ENCODE measurements at regions of chr2 and their contacts with region 1.

Region 1: DNA sequence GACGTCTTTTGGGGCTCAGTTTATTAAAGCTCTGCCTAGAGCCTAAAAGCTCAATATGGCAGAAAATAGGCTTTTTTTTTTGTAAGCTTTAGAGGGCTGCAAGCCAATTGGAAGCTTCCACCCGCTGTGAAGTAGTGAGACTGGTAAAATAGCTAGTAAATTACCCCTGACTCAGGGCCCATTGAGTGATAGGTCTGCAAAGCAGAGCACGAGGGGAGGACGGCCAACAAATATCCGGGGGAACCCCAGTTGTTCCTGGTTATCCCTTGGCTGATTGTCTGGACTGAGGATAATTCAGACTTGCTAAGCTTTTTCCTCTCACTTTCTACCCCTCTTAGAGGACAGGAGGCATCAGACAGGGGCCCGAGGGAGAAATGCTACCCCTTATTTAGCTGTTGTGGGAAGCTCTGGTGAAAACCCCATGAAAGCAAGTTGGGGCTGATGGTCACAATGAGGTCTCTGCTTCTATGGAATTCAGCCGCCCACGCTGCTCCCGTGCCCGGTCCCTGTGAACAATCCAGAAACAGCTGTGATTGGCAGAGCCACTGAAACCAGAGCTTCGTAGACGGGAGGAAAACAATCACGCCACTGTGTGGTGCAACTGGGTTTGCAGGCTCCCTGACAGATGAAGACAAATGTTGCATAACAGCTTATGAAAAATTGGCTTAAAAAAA is 141.9 kb upstream of the LGALSL start:
- DNase-seq: peak; percentile 78
- ATAC-seq: peak; percentile 91
- H3K4me3 ChIP-seq: no peak overlapping the region
- H3K27ac ChIP-seq: no peak overlapping the region
- H3K4me1 ChIP-seq: peaks cover 3% of the 10 kb centered on the region
- H3K27me3 ChIP-seq: peaks cover 28% of the 10 kb centered on the region
- CTCF ChIP-seq: peak; percentile 51
- POLR2A ChIP-seq: no peak
- RAD21 ChIP-seq: peak; percentile 58

Region 2: DNA sequence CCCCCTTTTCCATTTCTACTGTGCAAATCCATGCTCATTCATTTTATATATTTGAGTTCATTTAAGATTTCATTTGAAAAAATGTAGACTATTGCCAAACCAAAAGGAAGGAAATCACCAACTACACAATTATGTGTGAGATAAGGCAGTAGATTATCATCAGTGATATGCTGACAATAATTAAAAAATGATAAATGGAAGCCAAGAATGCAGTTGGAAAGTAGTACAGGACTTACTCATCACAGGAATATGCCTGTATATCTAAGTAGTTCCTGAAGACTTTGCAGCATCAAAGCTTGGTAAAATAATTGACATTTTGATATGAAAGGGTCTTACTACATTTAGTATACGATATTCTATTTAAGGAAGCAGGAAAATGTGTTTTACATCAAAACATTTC is 1427.6 kb before region 1 on chr2:
- CTCF ChIA-PET with region 1: no interaction called
- POLR2A ChIA-PET with region 1: no interaction called
- dilution Hi-C with region 1: no loop called
- in situ Hi-C with region 1: no loop called
- intact Hi-C with region 1: no loop called
- DNase-seq: peak; percentile 30
- ATAC-seq: peak; percentile 56; the same call in 1 of the 2 replicates
- H3K4me3 ChIP-seq: no peak overlapping the region
- H3K27ac ChIP-seq: no peak overlapping the region
- H3K4me1 ChIP-seq: no peaks in the 10 kb centered on the region
- H3K27me3 ChIP-seq: no peaks in the 10 kb centered on the region
- CTCF ChIP-seq: no peak
- POLR2A ChIP-seq: no peak
- RAD21 ChIP-seq: no peak

Region 3: GRCh38 chr2:64045938-64046337 is 266.1 kb before region 1 on chr2:
- CTCF ChIA-PET with region 1: interaction called, 20 read pairs
- POLR2A ChIA-PET with region 1: interaction called, 3 read pairs
- dilution Hi-C with region 1: loop called (anchors 25 kb)
- in situ Hi-C with region 1: no loop called
- intact Hi-C with region 1: loop called (anchors 5 kb)
- DNase-seq: no peak
- ATAC-seq: no peak
- H3K4me3 ChIP-seq: no peak overlapping the region
- H3K27ac ChIP-seq: no peak overlapping the region
- H3K4me1 ChIP-seq: no peaks in the 10 kb centered on the region
- H3K27me3 ChIP-seq: peaks cover 4% of the 10 kb centered on the region; the same call in 1 of the 2 replicates
- CTCF ChIP-seq: no peak
- POLR2A ChIP-seq: no peak
- RAD21 ChIP-seq: no peak

Region 4: DNA sequence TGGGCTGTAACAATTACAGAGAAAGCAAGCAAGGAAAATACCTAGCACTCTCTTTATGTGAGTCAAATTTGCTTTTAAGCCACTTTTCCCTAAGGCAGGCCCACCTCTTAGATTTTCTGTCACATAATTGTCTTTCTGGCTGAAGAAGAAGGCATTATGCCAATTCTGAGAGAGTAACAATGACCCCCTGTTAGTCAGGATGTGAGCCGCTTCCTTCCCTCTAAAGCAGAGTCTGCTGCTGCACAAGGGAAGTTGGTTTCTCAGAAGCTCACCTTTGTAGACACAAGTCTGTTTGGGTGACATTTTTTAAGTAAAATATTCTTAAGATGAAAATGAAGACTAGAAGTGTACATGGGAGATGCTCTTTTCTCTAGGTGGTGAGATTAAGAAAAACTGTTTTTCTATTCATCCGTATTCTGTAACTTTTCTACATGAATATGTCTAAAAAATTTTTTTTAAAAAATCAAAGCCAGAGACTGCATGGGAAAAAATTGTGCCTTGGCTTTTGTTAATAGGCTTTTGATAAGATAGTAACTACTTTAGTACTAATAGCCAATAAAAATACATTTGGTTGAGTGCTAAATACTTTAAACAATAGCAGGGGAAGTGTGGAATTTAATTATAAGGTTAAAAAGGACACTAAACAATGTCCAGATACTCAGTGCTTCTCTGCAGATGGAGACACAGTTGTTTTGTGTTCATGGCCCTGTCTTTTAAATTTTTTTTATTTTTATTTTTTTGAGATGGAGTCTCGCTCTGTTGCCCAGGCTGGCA is 259.4 kb before region 1 on chr2:
- CTCF ChIA-PET with region 1: interaction called, 20 read pairs
- POLR2A ChIA-PET with region 1: interaction called, 3 read pairs
- dilution Hi-C with region 1: loop called (anchors 25 kb)
- in situ Hi-C with region 1: no loop called
- intact Hi-C with region 1: loop called (anchors 5 kb)
- DNase-seq: peak; percentile 5
- ATAC-seq: no peak
- H3K4me3 ChIP-seq: no peak overlapping the region
- H3K27ac ChIP-seq: no peak overlapping the region
- H3K4me1 ChIP-seq: no peaks in the 10 kb centered on the region
- H3K27me3 ChIP-seq: peaks cover 4% of the 10 kb centered on the region
- CTCF ChIP-seq: no peak
- POLR2A ChIP-seq: no peak
- RAD21 ChIP-seq: no peak

Region 5: GRCh38 chr2:64062829-64063228 is 249.3 kb before region 1 on chr2:
- CTCF ChIA-PET with region 1: no interaction called
- POLR2A ChIA-PET with region 1: no interaction called
- dilution Hi-C with region 1: loop called (anchors 25 kb)
- in situ Hi-C with region 1: no loop called
- intact Hi-C with region 1: no loop called
- DNase-seq: peak; percentile 82
- ATAC-seq: no peak
- H3K4me3 ChIP-seq: no peak overlapping the region
- H3K27ac ChIP-seq: no peak overlapping the region
- H3K4me1 ChIP-seq: peaks cover 8% of the 10 kb centered on the region; the same call in 1 of the 2 replicates
- H3K27me3 ChIP-seq: no peaks in the 10 kb centered on the region
- CTCF ChIP-seq: no peak
- POLR2A ChIP-seq: no peak
- RAD21 ChIP-seq: no peak

Region 6: GRCh38 chr2:64144057-64145013 is 167.8 kb before region 1 on chr2 and contains the start of gene PELI1:
- CTCF ChIA-PET with region 1: no interaction called
- POLR2A ChIA-PET with region 1: no interaction called
- dilution Hi-C with region 1: no loop called
- in situ Hi-C with region 1: no loop called
- intact Hi-C with region 1: loop called (anchors 5 kb)
- DNase-seq: peak; percentile 95
- ATAC-seq: peak; percentile 98
- H3K4me3 ChIP-seq: peak within 1 kb of the TSS; percentile 90
- H3K27ac ChIP-seq: peak within 1 kb of the TSS; percentile 52
- H3K4me1 ChIP-seq: no peaks in the 10 kb centered on the region
- H3K27me3 ChIP-seq: peaks cover 2% of the 10 kb centered on the region
- CTCF ChIP-seq: peak; percentile 20; the same call in 1 of the 2 replicates
- POLR2A ChIP-seq: peak; percentile 80
- RAD21 ChIP-seq: peak; percentile 12; the same call in 1 of the 2 replicates
- total RNA-seq, gene PELI1: 2.5 and 4.2 TPM in 2 replicates

Region 7: GRCh38 chr2:64165706-64166105 is 146.4 kb before region 1 on chr2:
- CTCF ChIA-PET with region 1: no interaction called
- POLR2A ChIA-PET with region 1: interaction called, 10 read pairs
- dilution Hi-C with region 1: no loop called
- in situ Hi-C with region 1: no loop called
- intact Hi-C with region 1: no loop called
- DNase-seq: peak; percentile 84
- ATAC-seq: peak; percentile 80
- H3K4me3 ChIP-seq: no peak overlapping the region
- H3K27ac ChIP-seq: no peak overlapping the region
- H3K4me1 ChIP-seq: no peaks in the 10 kb centered on the region
- H3K27me3 ChIP-seq: peaks cover 5% of the 10 kb centered on the region
- CTCF ChIP-seq: no peak
- POLR2A ChIP-seq: no peak
- RAD21 ChIP-seq: no peak

Measured in IMR-90 (cell line).